Tibial artery (tissue), 4 donors: ENCODE measurements at regions of chr20 and their contacts with region 1.

Region 1: DNA sequence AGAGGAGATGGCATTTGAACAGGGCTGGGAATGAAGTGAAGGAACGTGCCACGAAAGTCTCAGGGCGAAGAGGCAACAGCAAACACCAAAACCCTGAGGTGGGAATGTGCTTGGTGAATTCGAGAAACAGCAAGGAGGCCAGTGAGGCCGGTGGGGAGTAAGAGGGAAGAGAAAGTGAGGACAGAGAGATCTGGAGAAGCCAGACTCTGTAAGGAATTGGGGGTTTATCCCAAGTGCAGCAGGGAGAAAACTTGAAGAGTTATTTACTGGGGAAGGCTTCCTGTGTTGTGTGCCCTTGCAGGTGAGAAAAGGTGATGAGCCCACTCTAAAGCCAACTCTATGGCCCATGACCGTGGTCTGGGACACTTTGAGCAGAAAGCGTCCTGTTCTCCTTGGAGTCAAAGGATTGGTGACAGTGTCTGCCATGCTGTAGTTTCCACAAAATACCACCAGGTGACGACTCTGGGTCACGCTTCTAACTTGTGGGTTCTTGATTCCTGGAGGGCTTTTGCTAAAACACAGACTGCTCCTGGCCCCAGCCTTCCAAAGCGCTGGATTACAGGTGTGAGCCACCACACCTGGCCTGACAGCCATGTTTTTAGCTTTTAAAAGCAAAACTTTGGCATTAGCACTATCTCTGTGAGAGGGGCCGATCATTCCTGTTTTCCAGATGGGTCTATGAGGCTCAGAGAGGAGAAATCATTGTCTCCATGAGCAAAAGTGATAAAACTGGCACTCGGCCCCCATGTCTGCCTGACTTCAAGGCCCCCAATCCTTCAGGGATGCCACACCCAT is 18.0 kb upstream of the CSNK2A1 start:
- DNase-seq: peak; percentile 50 to 74
- H3K4me3 ChIP-seq: no peak overlapping the region
- H3K27ac ChIP-seq: no peak overlapping the region
- H3K4me1 ChIP-seq: no peaks in the 10 kb centered on the region
- H3K27me3 ChIP-seq: peaks cover 0 to 40% of the 10 kb centered on the region in 2 donors
- CTCF ChIP-seq: peak; percentile 84 to 94

Region 2: DNA sequence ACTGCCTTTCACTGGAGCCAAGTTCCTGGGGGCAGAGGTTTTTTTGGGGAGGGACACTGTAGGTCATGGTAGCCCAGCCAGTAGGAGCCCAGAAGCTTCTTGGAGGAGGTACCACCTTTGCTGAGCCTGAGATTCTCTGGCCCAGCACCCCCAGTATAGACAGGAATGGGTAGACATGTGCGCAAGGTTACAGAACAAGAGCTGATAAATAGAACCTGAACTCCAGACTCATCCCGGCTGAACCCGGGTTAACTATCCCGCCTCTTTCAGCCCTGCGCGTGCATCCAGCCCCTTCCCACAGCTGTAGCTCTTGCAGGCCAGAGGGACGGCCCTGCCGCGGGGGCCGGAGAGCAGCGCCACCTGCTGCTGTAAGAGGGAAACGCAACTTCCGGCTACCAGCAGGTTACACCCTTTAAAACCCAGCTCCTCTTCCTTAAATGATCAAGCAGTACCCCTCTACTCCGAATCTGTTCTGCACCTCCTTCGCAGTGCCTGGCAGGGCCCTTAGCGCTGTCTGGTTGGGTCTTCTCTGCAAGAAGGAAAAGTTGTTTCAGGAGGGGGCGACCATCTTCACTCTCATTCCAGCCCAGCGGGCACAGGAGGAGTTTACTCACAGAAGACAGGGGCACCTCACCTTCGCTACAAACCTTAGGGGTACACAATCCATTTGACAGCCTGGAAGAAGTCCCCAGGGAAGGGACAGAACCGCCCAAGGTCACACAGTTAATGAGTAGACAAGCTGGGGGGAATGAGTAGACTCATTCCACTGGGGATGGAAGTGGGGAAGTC is 83.9 kb after region 1 on chr20:
- intact Hi-C with region 1: loop called (anchors 5 kb)
- DNase-seq: peak in 1 of 2 donors; percentile 76
- H3K4me3 ChIP-seq: no peak overlapping the region
- H3K27ac ChIP-seq: no peak overlapping the region
- H3K4me1 ChIP-seq: peaks cover 0 to 12% (median 8%) of the 10 kb centered on the region in 4 donors
- H3K27me3 ChIP-seq: peaks cover 0 to 22% of the 10 kb centered on the region in 2 donors
- CTCF ChIP-seq: peak; percentile 63 to 80

Region 3: DNA sequence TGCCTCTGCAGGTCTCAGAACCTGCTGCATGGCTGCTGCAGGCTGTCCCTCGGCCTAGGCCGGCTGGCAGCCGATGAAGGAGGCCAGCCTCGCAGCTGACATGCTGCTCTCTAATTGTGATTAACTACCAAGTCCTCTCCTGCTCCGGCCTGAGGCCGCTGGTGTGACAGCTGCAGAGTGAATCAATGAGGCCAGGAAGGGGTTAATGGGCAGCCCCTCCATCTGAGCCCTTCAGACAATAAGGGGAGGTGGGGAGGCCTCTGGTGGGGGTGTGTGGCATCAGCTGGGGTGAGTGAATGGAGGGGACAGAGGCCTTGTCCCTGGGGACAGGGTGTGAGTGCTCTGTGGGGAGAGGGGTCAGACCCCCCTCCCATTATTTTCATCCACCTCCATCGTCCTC is 172.2 kb after region 1 on chr20:
- intact Hi-C with region 1: loop called (anchors 5 kb)
- DNase-seq: no peak
- H3K4me3 ChIP-seq: no peak overlapping the region
- H3K27ac ChIP-seq: no peak overlapping the region
- H3K4me1 ChIP-seq: no peaks in the 10 kb centered on the region
- H3K27me3 ChIP-seq: peaks cover 0 to 31% of the 10 kb centered on the region in 2 donors
- CTCF ChIP-seq: no peak